PC-9 (cell line): ENCODE measurements at regions of chr13 and their contacts with region 1.

Region 1: GRCh38 chr13:98142380-98143156 is at the start of gene FARP1:
- DNase-seq: peak; percentile 65 to 91
- H3K4me3 ChIP-seq: peak within 1 kb of the TSS; percentile 80
- H3K27ac ChIP-seq: no peak within 1 kb of the TSS
- H3K4me1 ChIP-seq: peaks cover 20% of the 10 kb centered on the region
- H3K27me3 ChIP-seq: no peaks in the 10 kb centered on the region
- CTCF ChIP-seq: no peak
- total RNA-seq, gene FARP1: 40.1 and 62.1 TPM in 2 replicates

Region 2: DNA sequence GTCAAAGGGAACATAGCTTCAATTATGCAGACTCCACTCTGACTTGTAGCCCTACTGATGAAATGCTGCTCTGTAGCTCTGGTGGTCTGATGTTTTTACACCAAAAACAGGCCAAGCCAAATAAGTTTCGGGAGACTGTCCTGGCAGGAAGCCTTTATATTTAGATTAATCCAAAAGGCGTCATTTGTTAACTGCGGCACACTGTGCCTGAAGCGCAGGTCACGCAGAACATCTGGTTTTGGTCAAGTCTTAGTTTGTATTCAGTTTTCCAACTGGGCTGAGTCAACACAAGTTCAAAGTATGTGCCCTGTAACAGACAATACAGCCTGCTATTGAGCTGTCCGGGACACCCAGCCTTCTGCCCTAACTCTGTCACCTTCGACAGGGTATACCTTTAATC is 343.7 kb before region 1 on chr13:
- CTCF ChIA-PET with region 1: no interaction called
- POLR2A ChIA-PET with region 1: no interaction called
- intact Hi-C with region 1: no loop called
- DNase-seq: no peak
- H3K4me3 ChIP-seq: no peak overlapping the region
- H3K27ac ChIP-seq: no peak overlapping the region
- H3K4me1 ChIP-seq: 0 out of 2 replicates have a peak, but pooled peaks cover 6% of the 10 kb centered on the region
- H3K27me3 ChIP-seq: no peaks in the 10 kb centered on the region
- CTCF ChIP-seq: no peak

Region 3: DNA sequence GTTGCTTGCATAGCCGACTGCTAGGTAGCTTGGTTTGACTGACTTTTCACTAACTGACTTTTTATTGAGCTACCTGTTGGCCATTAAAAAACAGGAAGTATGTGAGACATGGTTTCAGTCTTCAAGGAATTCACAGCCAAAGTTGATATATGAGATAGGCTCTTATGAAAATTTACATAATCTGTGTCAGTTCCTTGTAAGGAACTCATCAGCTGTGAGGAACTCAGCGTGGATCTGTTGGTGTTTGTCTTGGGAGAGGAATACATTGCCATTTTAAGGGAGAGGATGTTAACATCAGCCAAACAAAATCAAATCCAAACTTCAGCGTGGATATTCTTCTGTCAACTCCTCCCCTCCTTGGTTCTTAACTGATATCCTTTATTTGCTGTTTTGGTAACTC is 32.5 kb after region 1 on chr13:
- CTCF ChIA-PET with region 1: interaction called, 11 read pairs
- POLR2A ChIA-PET with region 1: no interaction called
- intact Hi-C with region 1: no loop called
- DNase-seq: no peak
- H3K4me3 ChIP-seq: no peak overlapping the region
- H3K27ac ChIP-seq: no peak overlapping the region
- H3K4me1 ChIP-seq: peaks cover 16% of the 10 kb centered on the region
- H3K27me3 ChIP-seq: no peaks in the 10 kb centered on the region
- CTCF ChIP-seq: no peak

Region 4: DNA sequence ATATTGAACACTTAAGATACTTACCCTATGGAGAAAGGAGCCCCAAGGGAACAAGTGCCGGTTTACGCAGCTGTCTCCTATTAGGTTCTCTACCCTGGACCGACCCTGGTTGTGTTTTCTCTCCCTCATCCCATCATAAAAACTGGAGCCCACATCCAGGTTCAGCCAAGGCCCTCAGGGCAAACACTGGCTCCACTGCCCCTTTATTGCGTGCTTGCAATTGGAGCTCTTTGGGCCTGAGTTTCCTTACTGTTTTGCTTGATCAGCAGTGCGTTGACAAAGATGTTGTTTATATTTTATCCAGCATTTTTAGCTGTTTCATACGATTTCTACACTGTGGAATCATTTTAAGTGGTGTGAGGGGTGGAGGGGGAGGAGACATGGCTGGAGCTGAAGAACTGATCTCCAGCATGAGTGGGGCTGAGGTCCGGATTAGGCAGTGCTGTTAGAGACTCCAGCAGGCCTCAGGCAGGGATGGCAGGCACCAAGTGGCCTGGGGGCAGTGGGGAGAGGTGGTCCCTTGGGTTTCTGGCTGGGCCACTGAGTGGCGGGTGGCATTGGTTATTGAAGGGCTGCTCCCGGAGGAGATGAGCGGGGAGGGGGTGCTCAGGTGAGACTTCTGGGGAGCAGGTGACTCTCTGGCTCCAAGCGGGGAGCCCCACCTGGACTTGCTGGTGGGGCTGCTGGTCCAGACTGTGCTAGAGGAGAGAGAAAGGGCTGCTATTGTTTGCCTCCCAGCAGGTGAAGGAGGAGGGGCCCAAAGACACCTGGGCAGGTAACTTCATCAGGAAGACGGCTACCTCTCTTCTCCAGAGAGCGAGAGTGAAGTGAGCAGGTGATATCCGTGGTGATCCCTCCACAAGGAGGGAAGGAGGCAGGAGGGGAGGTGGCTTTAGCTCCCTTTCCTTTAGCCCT is 96.9 kb after region 1 on chr13:
- CTCF ChIA-PET with region 1: no interaction called
- POLR2A ChIA-PET with region 1: no interaction called
- intact Hi-C with region 1: no loop called
- DNase-seq: no peak
- H3K4me3 ChIP-seq: no peak overlapping the region
- H3K27ac ChIP-seq: no peak overlapping the region
- H3K4me1 ChIP-seq: no peaks in the 10 kb centered on the region
- H3K27me3 ChIP-seq: no peaks in the 10 kb centered on the region
- CTCF ChIP-seq: no peak

Region 5: GRCh38 chr13:98300956-98301641 is 158.5 kb after region 1 on chr13:
- CTCF ChIA-PET with region 1: no interaction called
- POLR2A ChIA-PET with region 1: no interaction called
- intact Hi-C with region 1: loop called (anchors 5 kb)
- DNase-seq: peak; percentile 41 to 90
- H3K4me3 ChIP-seq: peak overlapping the region; percentile 40; the same call in 1 of the 2 replicates
- H3K27ac ChIP-seq: peak overlapping the region; percentile 83
- H3K4me1 ChIP-seq: peaks cover 58% of the 10 kb centered on the region
- H3K27me3 ChIP-seq: no peaks in the 10 kb centered on the region
- CTCF ChIP-seq: no peak

Region 6: DNA sequence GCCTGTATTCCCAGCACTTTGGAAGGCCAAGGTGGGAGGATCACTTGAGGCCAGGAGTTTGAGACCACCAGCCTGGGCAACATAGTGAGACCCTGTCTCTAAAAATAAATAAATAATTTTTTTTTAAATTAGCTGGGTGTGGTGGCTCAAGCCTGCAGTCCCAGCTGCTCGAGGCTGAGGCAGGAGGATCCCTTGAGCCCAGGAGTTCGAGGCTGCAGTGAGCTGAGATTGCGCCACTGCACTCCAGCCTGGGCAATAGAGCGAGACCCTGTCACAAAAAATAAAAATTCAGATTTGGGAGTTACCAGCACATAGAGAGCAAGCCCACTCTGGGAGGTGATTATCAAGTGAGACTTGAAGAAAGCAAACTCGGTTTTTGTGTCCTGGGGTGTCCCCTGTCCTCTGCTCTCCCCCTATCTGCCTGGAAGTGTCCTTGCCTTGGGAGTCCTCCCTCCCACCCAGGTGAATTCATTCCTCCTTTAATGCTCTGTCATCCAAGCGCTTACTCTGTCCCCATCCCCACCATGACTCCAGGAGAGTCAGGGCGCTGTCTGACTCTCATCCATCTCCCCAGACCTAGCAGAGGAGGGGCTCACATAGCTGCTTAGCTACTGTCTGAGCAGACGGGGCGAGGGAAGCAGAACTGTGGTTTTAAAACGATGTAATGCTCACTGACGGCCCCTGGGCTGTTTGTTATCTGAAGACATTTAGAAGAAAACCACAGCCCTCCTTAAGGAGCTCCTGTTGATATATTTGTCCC is 287.6 kb after region 1 on chr13:
- CTCF ChIA-PET with region 1: no interaction called
- POLR2A ChIA-PET with region 1: no interaction called
- intact Hi-C with region 1: loop called (anchors 1 kb)
- DNase-seq: no peak
- H3K4me3 ChIP-seq: no peak overlapping the region
- H3K27ac ChIP-seq: no peak overlapping the region
- H3K4me1 ChIP-seq: peaks cover 10% of the 10 kb centered on the region
- H3K27me3 ChIP-seq: no peaks in the 10 kb centered on the region
- CTCF ChIP-seq: no peak